ENCODE measurements at regions of chr13 and their contacts with region 1.

Region 1: DNA sequence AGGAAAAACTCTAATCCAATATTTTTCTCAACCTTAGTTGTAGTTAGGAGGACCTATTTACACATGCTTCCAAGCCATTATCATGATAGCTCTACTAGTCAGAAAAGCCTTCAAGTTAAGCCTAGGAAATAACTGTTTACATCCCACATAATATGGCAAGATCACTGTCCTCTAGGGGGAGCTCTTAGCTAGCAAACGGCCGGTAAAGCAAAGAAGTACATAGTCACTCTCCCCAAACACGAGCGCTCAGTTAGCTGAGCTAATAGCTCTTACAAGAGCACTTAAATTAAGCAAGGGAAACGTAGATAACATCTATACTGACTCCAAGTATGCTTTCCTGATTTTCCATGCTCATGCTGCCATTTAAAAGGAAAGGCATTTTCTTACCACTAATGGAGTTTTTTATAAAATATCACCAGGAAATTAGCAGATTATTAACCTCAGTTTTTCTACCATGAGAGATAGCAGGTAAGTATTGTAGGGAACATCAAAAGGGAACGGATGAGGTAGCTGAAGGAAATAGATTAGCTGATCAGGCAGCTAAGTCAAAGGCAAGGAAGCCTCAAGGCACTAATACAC is 100.6 kb upstream of the PABPC3 start:
- DNase-seq: peak; percentile 75
- H3K4me3 ChIP-seq: no peak overlapping the region
- H3K27ac ChIP-seq: no peak overlapping the region
- H3K4me1 ChIP-seq: no peaks in the 10 kb centered on the region
- H3K27me3 ChIP-seq: peaks cover 0 to 33% (median 0%) of the 10 kb centered on the region in 4 donors
- CTCF ChIP-seq: peak; percentile 63 to 81 (median 71)
- EP300 ChIP-seq: no peak
- POLR2A ChIP-seq: no peak

Region 2: DNA sequence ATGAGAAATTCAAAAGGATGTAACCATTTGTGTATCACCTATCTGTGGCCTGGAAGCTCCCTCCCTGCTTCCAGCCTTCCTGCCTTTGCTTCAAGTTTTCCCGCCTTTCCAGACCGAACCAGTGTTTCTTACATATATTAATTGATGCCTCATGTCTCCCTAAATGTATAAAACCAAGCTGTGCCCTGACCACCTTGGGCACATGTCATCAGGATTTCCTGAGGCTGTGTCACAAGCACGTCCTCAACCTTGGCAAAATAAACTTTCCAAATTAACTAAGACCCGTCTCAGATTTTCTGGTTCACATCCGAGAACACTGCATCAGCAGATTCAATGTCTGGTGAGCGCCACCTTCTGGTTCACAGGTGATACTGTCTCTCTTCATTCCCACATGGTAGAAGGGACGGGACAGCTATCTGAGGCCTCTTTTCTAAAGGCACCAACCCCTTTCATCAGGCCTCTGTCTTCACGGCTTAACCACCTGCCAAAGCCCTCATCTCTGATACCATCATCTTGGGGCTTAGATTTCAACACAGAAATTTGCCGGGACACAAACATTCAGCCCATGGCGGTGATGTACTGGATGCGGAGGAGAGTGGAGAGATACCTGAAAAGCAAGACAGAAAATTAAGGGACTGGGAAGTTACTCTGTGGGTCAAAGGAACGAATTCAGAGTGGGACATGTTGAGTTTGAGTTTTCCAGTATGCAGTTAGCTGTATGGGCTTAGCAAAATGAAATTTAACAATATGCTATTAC is 41.9 kb after region 1 on chr13:
- intact Hi-C with region 1: loop called (anchors 5 kb)
- DNase-seq: no peak
- H3K4me3 ChIP-seq: no peak overlapping the region
- H3K27ac ChIP-seq: no peak overlapping the region
- H3K4me1 ChIP-seq: no peaks in the 10 kb centered on the region
- H3K27me3 ChIP-seq: peaks cover 0 to 58% (median 0%) of the 10 kb centered on the region in 4 donors
- CTCF ChIP-seq: peak; percentile 67 to 77 (median 74)
- EP300 ChIP-seq: no peak
- POLR2A ChIP-seq: no peak

Region 3: GRCh38 chr13:25114220-25114619 is 118.9 kb after region 1 on chr13:
- intact Hi-C with region 1: loop called (anchors 5 kb)
- DNase-seq: peak; percentile 91
- H3K4me3 ChIP-seq: no peak overlapping the region
- H3K27ac ChIP-seq: no peak overlapping the region
- H3K4me1 ChIP-seq: no peaks in the 10 kb centered on the region
- H3K27me3 ChIP-seq: peaks cover 0 to 32% (median 0%) of the 10 kb centered on the region in 4 donors
- CTCF ChIP-seq: peak; percentile 57 to 78 (median 60)
- EP300 ChIP-seq: no peak
- POLR2A ChIP-seq: no peak

Measured in esophagus muscularis mucosa (tissue), 4 donors.